ENCODE measurements at regions of chr5 and their contacts with region 1.

Region 1: DNA sequence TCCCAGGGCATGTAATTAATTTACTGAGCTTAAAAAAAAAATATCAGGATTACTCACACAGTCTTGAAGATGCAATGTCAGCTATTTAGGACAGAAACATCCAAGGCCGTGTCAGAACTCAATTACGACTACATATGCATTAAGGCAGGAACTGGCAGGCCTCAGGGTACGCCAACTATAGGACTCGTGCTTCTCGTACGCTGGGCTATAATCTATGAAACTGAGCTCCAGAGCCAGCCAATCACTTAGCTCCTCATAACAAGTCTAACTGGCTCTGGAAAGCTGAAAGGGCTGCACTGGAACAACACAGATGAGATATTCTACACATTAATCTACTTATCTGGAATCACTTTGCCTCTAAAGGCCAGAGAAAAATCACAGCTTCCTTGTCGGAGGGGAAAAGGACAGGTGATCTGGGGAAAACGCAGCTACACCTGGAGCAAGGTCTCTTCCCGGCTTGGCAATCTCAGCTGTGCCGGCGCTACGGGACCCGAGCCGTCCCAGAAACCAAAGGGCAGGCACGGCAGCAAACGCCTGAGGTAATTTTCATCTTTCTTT is 212.0 kb downstream of the DEPDC1B start:
- DNase-seq: peak; percentile 26 to 59
- H3K4me3 ChIP-seq: peak overlapping the region; percentile 25
- H3K4me3 Mint-ChIP-seq: peak overlapping the region; percentile 81
- H3K27ac Mint-ChIP-seq: peak overlapping the region; percentile 69
- H3K4me1 ChIP-seq: peaks cover 4% of the 10 kb centered on the region
- H3K4me1 Mint-ChIP-seq: peaks cover 11% of the 10 kb centered on the region
- H3K27me3 ChIP-seq: no peaks in the 10 kb centered on the region
- H3K27me3 Mint-ChIP-seq: no peaks in the 10 kb centered on the region
- CTCF ChIP-seq: no peak

Region 2: DNA sequence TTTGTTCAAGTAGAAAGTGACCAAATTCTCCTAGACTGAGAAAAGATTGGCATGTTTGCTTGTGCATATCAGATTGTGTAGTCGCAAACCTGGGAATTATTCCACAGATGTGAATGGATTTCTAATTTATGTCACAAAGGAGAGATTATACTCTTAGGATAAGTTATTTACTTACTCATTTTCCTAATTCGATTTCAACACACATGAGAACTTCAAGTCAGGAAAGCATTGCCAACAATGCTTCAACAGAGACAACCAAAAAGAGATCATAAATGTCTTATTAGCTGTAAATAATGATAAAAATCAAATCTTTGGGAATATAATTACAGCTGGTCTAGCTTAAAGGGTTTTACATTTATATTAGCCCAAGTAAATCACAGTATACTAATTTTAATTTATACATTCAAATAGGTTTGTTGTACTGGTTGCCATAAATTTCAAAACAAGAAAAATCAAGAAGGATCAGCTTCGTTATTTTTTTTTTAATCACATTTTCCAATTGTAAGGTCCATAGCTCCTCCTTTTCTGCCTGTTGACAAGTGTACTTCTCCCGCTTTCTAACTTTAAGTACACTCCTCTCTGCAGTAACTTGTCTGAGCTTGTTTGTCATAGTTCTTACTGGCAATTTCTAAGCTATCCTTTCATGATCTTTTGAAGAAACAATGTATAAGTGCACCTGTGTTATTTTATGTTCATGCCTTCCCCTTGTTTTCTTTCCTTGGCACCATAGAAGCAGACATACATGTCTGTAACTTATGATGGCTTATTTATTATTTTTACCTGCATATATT is 34.6 kb before region 1 on chr5:
- CTCF ChIA-PET with region 1: no interaction called
- POLR2A ChIA-PET with region 1: no interaction called
- intact Hi-C with region 1: loop called (anchors 5 kb)
- DNase-seq: no peak
- H3K4me3 ChIP-seq: no peak overlapping the region
- H3K4me3 Mint-ChIP-seq: no peak overlapping the region
- H3K27ac Mint-ChIP-seq: no peak overlapping the region
- H3K4me1 ChIP-seq: no peaks in the 10 kb centered on the region
- H3K4me1 Mint-ChIP-seq: peaks cover 4% of the 10 kb centered on the region
- H3K27me3 ChIP-seq: no peaks in the 10 kb centered on the region
- H3K27me3 Mint-ChIP-seq: peaks cover 2% of the 10 kb centered on the region
- CTCF ChIP-seq: no peak

Measured in Caco-2 (cell line).